ENCODE measurements at regions of chr7 and their contacts with region 1.

Region 1: DNA sequence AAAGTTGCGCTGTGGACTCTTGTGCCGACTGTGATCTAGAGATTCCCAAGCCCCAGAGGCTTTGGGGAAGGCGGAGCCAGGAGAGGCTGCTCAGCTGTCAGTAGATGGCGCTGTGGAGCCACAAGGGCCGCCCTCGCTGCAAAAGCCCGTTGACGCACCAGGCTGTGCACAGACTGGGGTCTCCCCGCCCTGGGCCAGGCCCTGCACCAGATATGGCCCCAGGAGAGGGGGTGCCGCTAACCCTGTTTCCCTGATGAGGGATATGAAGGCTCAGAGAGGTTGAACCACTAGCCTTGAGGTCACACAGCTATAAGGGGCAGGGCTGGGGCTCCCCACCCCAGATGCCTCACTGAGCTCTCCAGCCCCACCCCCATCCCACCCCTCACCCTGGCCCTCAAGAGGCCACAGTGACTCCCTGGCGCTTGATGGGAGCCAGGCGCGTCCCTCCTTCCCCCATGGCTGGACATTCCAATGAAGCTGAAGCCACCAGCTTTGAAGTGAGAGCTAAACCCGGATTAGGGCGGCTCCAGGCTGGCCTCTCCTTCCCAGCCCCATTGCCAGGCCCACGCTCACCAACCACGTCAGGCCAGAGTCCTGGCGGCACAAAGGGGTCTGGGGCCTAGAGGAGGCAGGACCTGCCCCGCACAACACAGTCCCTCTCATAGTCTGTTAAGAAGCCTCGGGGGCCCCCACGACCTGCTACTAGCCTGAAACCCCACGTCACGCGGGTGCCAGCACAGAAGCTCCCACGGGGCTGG is 26.4 kb downstream of the MYL10 start:
- DNase-seq: peak; percentile 71 to 87 (median 75)
- ATAC-seq: peak; percentile 75 to 95 (median 84)
- H3K4me3 ChIP-seq: no peak overlapping the region
- H3K27ac ChIP-seq: no peak overlapping the region
- H3K4me1 ChIP-seq: peaks cover 0 to 8% (median 0%) of the 10 kb centered on the region in 12 donors
- H3K27me3 ChIP-seq: peaks cover 0 to 6% (median 0%) of the 10 kb centered on the region in 9 donors
- CTCF ChIP-seq: peak; percentile 77 to 95 (median 89)
- POLR2A ChIP-seq: no peak

Region 2: GRCh38 chr7:101550641-101551541 is 51.8 kb before region 1 on chr7:
- intact Hi-C with region 1: no loop called
- DNase-seq: peak in 3 of 5 donors; percentile 2 to 57 (median 13)
- ATAC-seq: peak in 1 of 4 donors; percentile 23
- H3K4me3 ChIP-seq: no peak overlapping the region
- H3K27ac ChIP-seq: no peak overlapping the region
- H3K4me1 ChIP-seq: no peaks in the 10 kb centered on the region
- H3K27me3 ChIP-seq: no peaks in the 10 kb centered on the region
- CTCF ChIP-seq: no peak
- POLR2A ChIP-seq: no peak

Region 3: GRCh38 chr7:101678658-101679057 is 76.0 kb after region 1 on chr7:
- intact Hi-C with region 1: loop called in 1 of 10 experiments (anchors 10 kb)
- DNase-seq: peak in 2 of 5 donors; percentile 39 to 69
- ATAC-seq: peak in 1 of 4 donors; percentile 17
- H3K4me3 ChIP-seq: no peak overlapping the region
- H3K27ac ChIP-seq: no peak overlapping the region
- H3K4me1 ChIP-seq: peaks cover 0 to 18% (median 10%) of the 10 kb centered on the region in 12 donors
- H3K27me3 ChIP-seq: no peaks in the 10 kb centered on the region
- CTCF ChIP-seq: no peak
- POLR2A ChIP-seq: no peak

Region 4: GRCh38 chr7:102152672-102153585 is 550.3 kb after region 1 on chr7:
- intact Hi-C with region 1: no loop called
- DNase-seq: peak in 4 of 5 donors; percentile 19 to 72 (median 38)
- ATAC-seq: peak; percentile 80 to 90 (median 86)
- H3K4me3 ChIP-seq: no peak overlapping the region
- H3K27ac ChIP-seq: peak overlapping the region; percentile 41 to 92 (median 75)
- H3K4me1 ChIP-seq: peaks cover 0 to 28% (median 14%) of the 10 kb centered on the region in 12 donors
- H3K27me3 ChIP-seq: no peaks in the 10 kb centered on the region
- CTCF ChIP-seq: no peak
- POLR2A ChIP-seq: no peak

Region 5: GRCh38 chr7:102236592-102237287 is 634.1 kb after region 1 on chr7:
- intact Hi-C with region 1: loop called in 8 of 10 experiments (anchors 5 to 10 kb)
- DNase-seq: peak in 4 of 5 donors; percentile 45 to 64 (median 58)
- ATAC-seq: peak; percentile 73 to 90 (median 79)
- H3K4me3 ChIP-seq: no peak overlapping the region
- H3K27ac ChIP-seq: no peak overlapping the region
- H3K4me1 ChIP-seq: peaks cover 0 to 11% (median 3%) of the 10 kb centered on the region in 12 donors
- H3K27me3 ChIP-seq: no peaks in the 10 kb centered on the region
- CTCF ChIP-seq: peak; percentile 52 to 90 (median 82)
- POLR2A ChIP-seq: no peak

Region 6: DNA sequence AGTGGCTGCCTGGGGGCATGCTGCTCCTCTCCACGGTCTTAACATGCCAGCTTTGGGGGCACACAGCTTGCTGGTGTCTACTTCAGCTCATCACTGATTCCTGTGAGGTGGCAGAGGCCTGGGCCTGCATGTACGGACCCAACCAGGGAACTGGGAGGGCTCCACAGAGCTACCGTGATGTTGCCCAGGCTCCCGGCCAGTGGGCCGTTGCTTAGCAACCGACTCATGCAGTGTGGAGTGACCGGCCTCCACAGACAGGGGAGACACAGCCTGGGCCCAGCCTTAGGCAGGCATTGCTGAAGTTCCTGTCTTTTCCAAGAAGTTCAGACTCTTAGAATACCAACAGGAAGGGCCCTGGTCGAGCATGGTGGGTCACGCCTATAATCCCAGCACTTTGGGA is 658.2 kb after region 1 on chr7:
- intact Hi-C with region 1: loop called in 1 of 10 experiments (anchors 10 kb)
- DNase-seq: peak in 4 of 5 donors; percentile 49 to 83 (median 62)
- ATAC-seq: peak; percentile 77 to 92 (median 88)
- H3K4me3 ChIP-seq: no peak overlapping the region
- H3K27ac ChIP-seq: no peak overlapping the region
- H3K4me1 ChIP-seq: no peaks in the 10 kb centered on the region
- H3K27me3 ChIP-seq: no peaks in the 10 kb centered on the region
- CTCF ChIP-seq: no peak
- POLR2A ChIP-seq: no peak

Region 7: GRCh38 chr7:102279537-102280400 is 677.1 kb after region 1 on chr7:
- intact Hi-C with region 1: loop called in 6 of 10 experiments (anchors 5 to 10 kb)
- DNase-seq: peak in 4 of 5 donors; percentile 43 to 81 (median 50)
- ATAC-seq: peak in 3 of 4 donors; percentile 73 to 79 (median 77)
- H3K4me3 ChIP-seq: no peak overlapping the region
- H3K27ac ChIP-seq: no peak overlapping the region
- H3K4me1 ChIP-seq: peaks cover 0 to 10% (median 0%) of the 10 kb centered on the region in 12 donors
- H3K27me3 ChIP-seq: no peaks in the 10 kb centered on the region
- CTCF ChIP-seq: peak; percentile 68 to 88 (median 83)
- POLR2A ChIP-seq: no peak

Measured in heart left ventricle (tissue), 16 donors.